Activated B cell treated with CpG ODN at 0.5 μM for 24 hours (primary cell): ENCODE measurements at regions of chr6 and their contacts with region 1.

Region 1: GRCh38 chr6:34248727-34249551 is at the start of gene SMIM29:
- DNase-seq: peak; percentile 98
- ATAC-seq: peak; percentile 90
- H3K4me3 Mint-ChIP-seq: peak within 1 kb of the TSS; percentile 95
- H3K27ac Mint-ChIP-seq: peak within 1 kb of the TSS; percentile 96
- H3K4me1 Mint-ChIP-seq: peaks cover 53% of the 10 kb centered on the region
- H3K27me3 Mint-ChIP-seq: no peaks in the 10 kb centered on the region
- CTCF ChIP-seq: no peak
- total RNA-seq, gene SMIM29: 25.8 and 27.7 TPM in 2 replicates

Region 2: GRCh38 chr6:34161857-34162515 is 87.0 kb before region 1 on chr6:
- CTCF ChIA-PET with region 1: interaction called, 19 read pairs
- POLR2A ChIA-PET with region 1: interaction called, 8 read pairs
- intact Hi-C with region 1: loop called (anchors 1 kb)
- DNase-seq: peak; percentile 7
- ATAC-seq: no peak
- H3K4me3 Mint-ChIP-seq: no peak overlapping the region
- H3K27ac Mint-ChIP-seq: no peak overlapping the region
- H3K4me1 Mint-ChIP-seq: peaks cover 3% of the 10 kb centered on the region
- H3K27me3 Mint-ChIP-seq: no peaks in the 10 kb centered on the region
- CTCF ChIP-seq: no peak

Region 3: DNA sequence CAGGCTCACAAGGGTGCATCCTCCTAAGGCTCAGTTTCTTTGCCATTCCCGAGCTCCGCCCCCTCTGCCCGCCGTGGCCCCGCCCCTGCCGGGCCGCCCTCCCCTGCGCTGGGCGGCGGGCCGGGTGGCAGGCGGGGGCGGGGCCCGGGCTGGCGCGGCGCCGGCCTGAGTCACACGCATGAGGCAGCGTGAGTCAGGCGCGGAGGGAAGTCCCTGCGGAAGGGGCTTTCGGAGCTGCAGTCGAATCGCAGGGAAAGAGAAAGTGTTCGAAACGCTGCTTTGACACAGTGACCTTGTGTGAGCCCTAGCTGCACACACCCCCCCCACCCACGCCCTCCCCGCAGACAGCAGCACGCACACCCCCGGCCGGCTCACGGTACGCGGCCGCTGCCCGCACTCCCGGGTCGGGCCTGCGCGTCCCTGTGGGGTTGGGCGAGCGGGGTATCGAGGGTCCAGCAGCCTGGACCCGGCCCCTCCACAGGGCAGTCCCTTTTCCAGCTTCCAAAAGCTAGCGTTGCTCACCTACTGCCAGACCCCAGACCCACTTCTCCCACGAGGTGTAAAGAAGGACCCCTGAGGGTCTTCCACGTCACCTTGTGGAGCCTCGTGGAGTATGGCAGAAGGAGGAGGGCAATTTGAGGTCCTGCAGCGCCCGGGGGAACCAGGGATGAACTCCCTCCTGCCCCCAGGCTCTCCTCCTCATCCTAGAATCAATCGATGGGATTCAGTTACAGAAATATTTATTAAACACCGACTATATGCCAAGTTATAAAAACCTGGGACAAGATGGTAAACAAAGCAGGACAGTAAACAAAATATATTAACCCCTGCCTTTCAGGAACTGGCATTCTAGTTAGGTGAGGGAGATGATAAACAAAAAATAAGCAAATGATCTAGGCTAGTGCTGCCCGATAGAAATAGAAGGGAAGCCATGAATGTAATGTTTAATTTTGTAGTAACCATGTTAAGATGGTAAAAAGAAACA is 24.7 kb before region 1 on chr6:
- CTCF ChIA-PET with region 1: interaction called, 13 read pairs
- POLR2A ChIA-PET with region 1: interaction called, 18 read pairs
- intact Hi-C with region 1: loop called (anchors 1 kb)
- DNase-seq: peak; percentile 94
- ATAC-seq: peak; percentile 94
- H3K4me3 Mint-ChIP-seq: peak overlapping the region; percentile 68
- H3K27ac Mint-ChIP-seq: peak overlapping the region; percentile 87
- H3K4me1 Mint-ChIP-seq: peaks cover 64% of the 10 kb centered on the region
- H3K27me3 Mint-ChIP-seq: no peaks in the 10 kb centered on the region
- CTCF ChIP-seq: no peak

Region 4: DNA sequence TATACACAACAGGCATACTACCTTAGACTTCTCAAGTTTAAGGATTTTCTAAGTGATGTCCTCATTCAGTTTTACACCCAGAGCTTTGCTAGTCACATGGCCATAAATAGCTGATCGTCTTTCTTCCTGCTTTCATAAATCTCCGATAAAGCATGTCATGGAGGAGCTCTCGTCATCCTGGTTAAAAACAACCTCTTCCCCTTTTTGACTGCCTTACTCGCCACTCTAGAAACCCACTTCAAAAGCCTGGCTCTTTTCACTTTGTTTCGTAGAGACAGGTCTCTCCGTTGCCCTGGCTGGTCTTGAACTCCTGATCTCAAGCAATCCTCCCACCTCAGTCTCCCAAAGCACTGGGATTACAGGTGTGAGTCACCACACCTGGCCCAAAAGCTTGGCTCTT is 66.8 kb after region 1 on chr6:
- CTCF ChIA-PET with region 1: interaction called, 5 read pairs
- POLR2A ChIA-PET with region 1: interaction called, 4 read pairs
- intact Hi-C with region 1: loop called (anchors 2 kb)
- DNase-seq: no peak
- ATAC-seq: peak; percentile 79
- H3K4me3 Mint-ChIP-seq: peak overlapping the region; percentile 77
- H3K27ac Mint-ChIP-seq: peak overlapping the region; percentile 94
- H3K4me1 Mint-ChIP-seq: peaks cover 69% of the 10 kb centered on the region
- H3K27me3 Mint-ChIP-seq: no peaks in the 10 kb centered on the region
- CTCF ChIP-seq: no peak

Region 5: DNA sequence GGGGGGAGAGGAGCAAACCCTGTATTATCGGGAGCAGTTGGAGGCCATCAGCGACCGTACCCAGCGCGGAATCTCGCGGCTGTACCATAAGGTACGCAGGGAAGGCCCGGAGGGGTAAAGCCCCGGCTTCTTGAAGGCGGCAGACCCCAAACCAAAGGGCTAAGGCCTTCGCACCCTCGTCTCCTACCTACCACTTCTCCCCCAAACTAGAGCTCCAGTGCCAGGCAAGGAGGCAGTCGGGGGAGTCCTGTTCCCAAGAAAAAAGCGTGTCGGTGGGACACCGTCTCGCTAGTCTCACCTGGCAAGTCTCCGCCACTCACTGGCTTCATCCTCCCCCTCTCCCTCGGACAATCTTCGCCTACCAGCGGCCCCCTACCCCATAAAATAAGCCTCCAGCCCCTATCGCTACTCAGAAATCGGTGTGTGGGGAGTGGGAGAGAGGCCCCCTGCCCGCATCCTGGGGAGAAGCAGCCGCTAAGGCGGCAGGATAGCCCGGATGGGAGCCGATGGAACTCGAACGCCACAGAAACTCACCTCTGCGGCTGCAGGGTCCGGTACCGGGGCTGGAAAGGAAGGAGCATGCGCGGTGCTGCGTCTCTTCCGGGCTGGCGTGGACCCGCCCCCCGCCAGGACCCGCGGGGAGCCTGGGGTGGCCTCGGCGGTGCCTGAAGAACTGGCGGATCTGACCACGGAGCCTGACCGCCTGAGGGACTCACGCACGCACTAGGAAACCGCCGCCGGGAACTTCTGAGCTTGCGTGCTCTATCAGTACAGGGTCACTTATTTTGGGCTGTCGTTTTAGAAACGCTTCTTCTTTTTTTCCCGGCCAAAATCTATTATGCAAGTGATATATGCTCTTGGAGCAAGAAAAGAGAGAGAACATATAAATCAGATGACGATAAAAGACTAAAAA is 176.8 kb after region 1 on chr6 and contains the start of gene RPS10:
- CTCF ChIA-PET with region 1: interaction called, 11 read pairs
- POLR2A ChIA-PET with region 1: interaction called, 26 read pairs
- intact Hi-C with region 1: no loop called
- DNase-seq: peak; percentile 97
- ATAC-seq: peak; percentile 99
- H3K4me3 Mint-ChIP-seq: peak within 1 kb of the TSS; percentile 97
- H3K27ac Mint-ChIP-seq: peak within 1 kb of the TSS; percentile 97
- H3K4me1 Mint-ChIP-seq: peaks cover 29% of the 10 kb centered on the region
- H3K27me3 Mint-ChIP-seq: no peaks in the 10 kb centered on the region
- CTCF ChIP-seq: no peak
- total RNA-seq, gene RPS10: 2,903 and 3,402 TPM in 2 replicates

Region 6: DNA sequence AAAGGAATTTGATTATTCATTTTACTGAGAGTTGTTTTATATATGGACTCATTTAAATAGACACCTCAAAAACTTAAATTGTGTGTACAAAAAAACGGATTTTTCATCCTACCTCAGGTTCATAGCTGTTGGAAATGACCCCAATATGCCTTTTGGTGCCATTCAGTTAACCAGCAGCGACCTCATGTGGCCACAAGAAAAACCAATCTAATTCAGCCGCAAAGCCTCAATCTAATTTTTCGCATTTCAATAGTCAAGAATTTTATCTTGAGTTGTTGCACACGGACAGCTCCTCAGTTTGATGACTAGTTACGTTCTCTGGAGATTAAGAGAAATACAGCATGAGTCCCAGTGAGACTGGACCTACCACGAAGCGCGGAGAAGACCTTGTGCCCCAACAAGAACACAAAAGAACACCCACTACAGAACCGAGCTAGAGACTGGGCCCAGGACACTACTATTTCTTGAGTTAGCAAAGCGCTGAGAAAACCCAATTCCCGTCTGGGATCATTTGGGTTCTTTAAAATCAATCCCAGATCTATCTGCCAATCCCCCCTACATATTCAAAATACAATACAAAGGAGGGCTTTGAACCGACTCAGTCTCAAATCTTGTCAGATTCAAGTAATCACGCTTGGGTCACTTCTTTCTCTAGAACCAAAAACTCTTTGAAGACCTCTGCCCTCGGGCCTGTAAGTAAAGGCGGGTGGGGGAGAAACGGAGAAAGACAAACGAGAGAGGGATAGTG is 891.1 kb after region 1 on chr6:
- CTCF ChIA-PET with region 1: interaction called, 5 read pairs
- POLR2A ChIA-PET with region 1: no interaction called
- intact Hi-C with region 1: loop called (anchors 1 kb)
- DNase-seq: peak; percentile 20
- ATAC-seq: no peak
- H3K4me3 Mint-ChIP-seq: peak overlapping the region; percentile 36
- H3K27ac Mint-ChIP-seq: no peak overlapping the region
- H3K4me1 Mint-ChIP-seq: peaks cover 17% of the 10 kb centered on the region
- H3K27me3 Mint-ChIP-seq: peaks cover 13% of the 10 kb centered on the region
- CTCF ChIP-seq: peak; percentile 59